ENCODE measurements at regions of chr11 and their contacts with region 1.

Region 1: DNA sequence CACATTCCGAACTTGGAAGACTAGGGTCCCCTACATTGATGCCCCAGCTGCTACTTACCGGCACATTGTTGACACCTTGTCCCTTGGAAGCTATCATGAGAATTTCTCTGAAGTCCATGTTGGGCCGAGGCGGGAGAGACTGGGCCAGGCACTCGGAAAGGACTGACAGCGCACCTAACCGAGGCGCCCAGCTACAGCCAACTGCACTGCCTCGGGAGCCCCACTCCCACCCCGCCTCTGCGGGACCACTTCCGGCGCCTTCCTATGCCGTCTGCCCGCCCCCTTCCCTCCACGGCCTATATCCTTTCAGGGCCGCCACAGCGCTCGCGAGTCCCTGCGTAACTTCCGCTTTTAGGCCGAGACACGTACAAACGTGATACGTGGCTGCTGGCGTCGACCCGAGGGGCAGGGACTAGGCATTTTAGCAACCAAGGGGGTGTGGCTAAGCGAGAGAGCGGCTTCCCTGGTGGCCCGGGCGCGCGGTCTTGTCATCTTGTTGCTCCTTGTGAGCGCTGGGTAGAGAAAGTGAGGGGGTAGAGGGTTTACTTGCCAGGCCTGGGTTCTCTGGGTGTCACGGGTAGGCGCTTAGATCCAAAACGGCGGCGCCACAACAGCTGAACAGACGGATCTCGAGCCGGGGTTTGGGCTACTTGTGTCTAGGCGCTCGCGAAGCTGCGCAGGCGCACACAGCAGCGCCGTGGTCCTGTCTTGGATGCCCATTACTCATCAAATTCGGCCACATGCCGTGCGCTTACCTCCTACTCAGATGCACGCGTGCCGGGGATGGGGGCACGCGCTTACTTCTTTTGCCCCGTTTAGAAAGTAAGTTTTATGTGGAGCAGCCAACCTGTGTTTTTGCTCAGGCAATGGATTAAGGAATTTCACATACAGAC is at the start of gene SPTY2D1:
- DNase-seq: peak; percentile 88 to 99 (median 98)
- ATAC-seq: peak; percentile 97
- H3K4me3 ChIP-seq: peak within 1 kb of the TSS; percentile 98
- H3K4me3 Mint-ChIP-seq: peak within 1 kb of the TSS; percentile 83 to 99 (median 96)
- H3K27ac ChIP-seq: peak within 1 kb of the TSS; percentile 98
- H3K27ac Mint-ChIP-seq: peak within 1 kb of the TSS; percentile 95 to 100 (median 98)
- H3K4me1 ChIP-seq: peaks cover 10 to 17% of the 10 kb centered on the region in 2 donors
- H3K4me1 Mint-ChIP-seq: peaks cover 6 to 58% (median 32%) of the 10 kb centered on the region in 7 donors
- H3K27me3 ChIP-seq: no peaks in the 10 kb centered on the region
- H3K27me3 Mint-ChIP-seq: peaks cover 0 to 7% (median 0%) of the 10 kb centered on the region in 5 donors
- total RNA-seq, gene SPTY2D1: 26.0 to 37.4 (median 28.2) TPM

Region 2: GRCh38 chr11:18012863-18013781 is 621.3 kb before region 1 on chr11 and contains the start of gene SERGEF:
- CTCF ChIA-PET with region 1: no interaction called
- POLR2A ChIA-PET with region 1: no interaction called
- intact Hi-C with region 1: loop called (anchors 1 to 2 kb)
- DNase-seq: peak; percentile 81 to 96 (median 87)
- ATAC-seq: peak; percentile 93
- H3K4me3 ChIP-seq: peak within 1 kb of the TSS; percentile 85
- H3K4me3 Mint-ChIP-seq: peak within 1 kb of the TSS; percentile 93 to 100 (median 98)
- H3K27ac ChIP-seq: peak within 1 kb of the TSS; percentile 84
- H3K27ac Mint-ChIP-seq: peak within 1 kb of the TSS; percentile 89 to 99 (median 99)
- H3K4me1 ChIP-seq: peaks cover 10% of the 10 kb centered on the region in 2 donors
- H3K4me1 Mint-ChIP-seq: peaks cover 17 to 47% (median 37%) of the 10 kb centered on the region in 7 donors
- H3K27me3 ChIP-seq: no peaks in the 10 kb centered on the region
- H3K27me3 Mint-ChIP-seq: no peaks in the 10 kb centered on the region
- total RNA-seq, gene SERGEF: 35.0 to 57.7 (median 52.9) TPM

Region 3: GRCh38 chr11:18395735-18396504 is 238.5 kb before region 1 on chr11:
- CTCF ChIA-PET with region 1: no interaction called
- POLR2A ChIA-PET with region 1: interaction called, 6 read pairs
- intact Hi-C with region 1: loop called (anchors 1 kb)
- DNase-seq: peak; percentile 87 to 98 (median 95)
- ATAC-seq: peak; percentile 78
- H3K4me3 ChIP-seq: peak overlapping the region; percentile 78
- H3K4me3 Mint-ChIP-seq: peak overlapping the region; percentile 96 to 99 (median 98)
- H3K27ac ChIP-seq: peak overlapping the region; percentile 95
- H3K27ac Mint-ChIP-seq: peak overlapping the region; percentile 94 to 98 (median 96)
- H3K4me1 ChIP-seq: peaks cover 12 to 14% of the 10 kb centered on the region in 2 donors
- H3K4me1 Mint-ChIP-seq: peaks cover 14 to 63% (median 32%) of the 10 kb centered on the region in 7 donors
- H3K27me3 ChIP-seq: no peaks in the 10 kb centered on the region
- H3K27me3 Mint-ChIP-seq: no peaks in the 10 kb centered on the region

Region 4: DNA sequence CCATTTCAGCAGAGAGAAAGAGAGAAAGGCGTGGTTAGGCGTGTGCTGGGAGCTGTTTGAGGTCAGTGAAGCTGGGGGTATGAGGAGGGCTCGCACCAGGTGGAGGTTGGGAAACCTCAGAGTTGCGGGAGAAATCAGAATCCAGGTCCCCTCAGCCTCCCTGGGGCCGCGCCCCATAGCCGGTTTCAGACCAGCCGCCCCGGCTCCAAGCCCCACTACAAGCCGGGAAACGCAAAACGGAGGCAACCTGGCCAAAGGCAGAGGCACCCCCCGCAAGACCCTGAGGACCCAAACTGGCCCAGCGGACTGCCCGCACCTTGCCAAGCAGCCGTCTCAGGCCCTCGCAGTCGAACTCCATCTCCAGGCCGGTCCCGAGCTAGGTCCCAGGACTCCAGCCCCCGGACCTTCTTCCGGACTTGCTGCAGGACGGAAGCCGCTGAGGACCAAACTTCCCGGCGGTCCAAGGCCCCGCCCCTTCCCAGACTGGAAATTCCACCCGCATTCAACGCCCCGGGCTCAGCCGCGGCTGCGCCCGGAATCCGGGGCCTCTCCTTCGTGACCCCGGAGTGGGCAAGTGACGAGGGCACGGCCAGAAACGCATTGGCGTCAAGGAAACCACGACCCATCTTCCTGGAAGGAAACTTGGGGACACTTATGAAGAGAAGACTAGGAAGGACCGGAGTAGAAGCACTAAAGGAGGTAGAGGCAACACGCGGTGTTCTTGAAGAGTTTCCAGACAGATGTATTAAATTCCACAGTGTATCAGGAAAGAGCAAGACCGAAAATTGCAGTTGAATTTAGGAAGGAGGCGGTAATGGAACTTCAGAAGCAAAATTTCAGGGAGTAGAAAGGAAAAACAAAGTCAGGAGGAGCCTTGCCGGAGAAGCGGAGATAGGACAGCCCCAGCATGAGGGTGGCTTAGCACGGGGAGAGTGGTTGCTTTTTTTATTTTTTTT is 45.8 kb before region 1 on chr11 and contains the start of gene UEVLD:
- CTCF ChIA-PET with region 1: no interaction called
- POLR2A ChIA-PET with region 1: interaction called, 14 read pairs
- intact Hi-C with region 1: loop called (anchors 1 kb)
- DNase-seq: peak; percentile 18 to 82 (median 23)
- ATAC-seq: peak; percentile 62
- H3K4me3 ChIP-seq: peak within 1 kb of the TSS; percentile 63
- H3K4me3 Mint-ChIP-seq: no peak within 1 kb of the TSS
- H3K27ac ChIP-seq: peak within 1 kb of the TSS; percentile 68
- H3K27ac Mint-ChIP-seq: no peak within 1 kb of the TSS
- H3K4me1 ChIP-seq: peaks cover 8 to 15% of the 10 kb centered on the region in 2 donors
- H3K4me1 Mint-ChIP-seq: peaks cover 0 to 19% (median 0%) of the 10 kb centered on the region in 7 donors
- H3K27me3 ChIP-seq: no peaks in the 10 kb centered on the region
- H3K27me3 Mint-ChIP-seq: no peaks in the 10 kb centered on the region
- total RNA-seq, gene UEVLD: 3.6 to 19.8 (median 5.8) TPM

Region 5: DNA sequence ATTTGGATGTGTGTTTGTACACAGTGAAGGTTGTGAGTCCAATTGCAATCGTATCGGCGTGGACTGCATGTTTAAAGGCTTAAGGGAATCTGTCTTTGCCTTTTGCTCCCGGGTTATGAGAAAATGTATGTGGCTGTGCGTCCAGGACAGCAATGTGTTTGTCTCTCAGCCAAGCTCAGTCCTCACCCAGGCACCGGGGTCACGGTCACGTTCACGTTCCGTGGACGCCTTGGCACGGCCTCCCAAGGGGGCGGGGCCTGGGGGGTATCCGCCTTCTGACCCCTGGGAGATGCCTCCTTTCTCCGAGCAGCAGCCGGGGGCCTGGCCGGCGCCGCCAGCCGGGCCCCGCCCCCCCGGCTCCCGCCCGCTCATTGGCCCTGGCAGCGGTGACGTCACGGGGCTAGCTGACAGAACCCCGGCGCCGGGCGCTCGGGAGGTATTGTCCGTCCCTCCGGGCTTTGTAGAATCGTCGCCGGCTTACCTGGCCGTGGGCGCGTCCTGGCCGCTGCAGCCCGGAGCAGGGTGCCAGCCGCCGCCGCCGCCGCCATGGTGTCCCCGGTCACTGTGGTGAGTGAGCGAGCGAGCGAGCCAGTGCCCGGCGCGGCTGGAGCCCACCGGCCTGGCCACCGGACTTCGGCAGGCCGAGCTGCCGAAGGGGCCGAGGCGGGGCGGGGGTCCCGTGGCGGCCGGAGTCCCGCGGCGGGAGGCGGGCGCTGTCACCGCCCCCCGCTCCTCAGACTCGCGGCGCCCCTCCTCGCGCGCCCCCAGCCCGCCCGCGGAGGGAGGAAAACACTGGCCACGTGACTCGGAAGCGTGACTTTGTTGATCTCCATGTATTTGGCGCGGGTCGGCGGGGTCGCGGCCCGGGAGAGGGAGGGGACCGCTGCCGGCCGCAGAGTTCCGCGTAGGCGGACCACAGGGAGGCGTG is 64.2 kb after region 1 on chr11 and contains the start of gene TMEM86A:
- CTCF ChIA-PET with region 1: no interaction called
- POLR2A ChIA-PET with region 1: interaction called, 12 read pairs
- intact Hi-C with region 1: loop called (anchors 1 kb)
- DNase-seq: peak; percentile 81 to 89 (median 87)
- ATAC-seq: peak; percentile 97
- H3K4me3 ChIP-seq: peak within 1 kb of the TSS; percentile 42
- H3K4me3 Mint-ChIP-seq: peak within 1 kb of the TSS; percentile 76 to 89 (median 84)
- H3K27ac ChIP-seq: peak within 1 kb of the TSS; percentile 72
- H3K27ac Mint-ChIP-seq: peak within 1 kb of the TSS; percentile 42 to 95 (median 89)
- H3K4me1 ChIP-seq: peaks cover 6% of the 10 kb centered on the region in 2 donors
- H3K4me1 Mint-ChIP-seq: peaks cover 14 to 27% (median 20%) of the 10 kb centered on the region in 7 donors
- H3K27me3 ChIP-seq: no peaks in the 10 kb centered on the region
- H3K27me3 Mint-ChIP-seq: peaks cover 0 to 39% (median 0%) of the 10 kb centered on the region in 5 donors
- total RNA-seq, gene TMEM86A: 0.53 to 6.5 (median 5.5) TPM

Region 6: DNA sequence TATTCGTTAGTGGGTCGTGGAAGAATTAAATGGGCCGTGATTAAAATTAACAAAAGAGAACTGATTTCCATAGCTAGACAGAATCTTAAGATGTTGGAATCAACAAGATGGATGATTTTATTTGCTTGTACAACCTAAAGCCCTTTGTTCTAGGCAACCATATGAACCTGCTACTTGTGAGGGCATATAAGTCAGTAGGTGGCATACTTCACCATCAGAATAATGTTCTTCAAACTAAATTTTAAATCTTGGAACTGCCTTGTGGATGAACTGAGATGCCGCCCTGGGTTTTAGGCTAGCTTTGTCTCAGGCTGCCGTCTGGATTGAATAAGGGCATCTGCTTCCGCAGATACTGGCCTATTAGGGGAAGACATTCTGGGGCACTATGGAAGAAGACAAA is 526.5 kb after region 1 on chr11:
- CTCF ChIA-PET with region 1: no interaction called
- POLR2A ChIA-PET with region 1: no interaction called
- intact Hi-C with region 1: no loop called
- DNase-seq: no peak
- ATAC-seq: no peak
- H3K4me3 ChIP-seq: no peak overlapping the region
- H3K4me3 Mint-ChIP-seq: no peak overlapping the region
- H3K27ac ChIP-seq: no peak overlapping the region
- H3K27ac Mint-ChIP-seq: no peak overlapping the region
- H3K4me1 ChIP-seq: no peaks in the 10 kb centered on the region
- H3K4me1 Mint-ChIP-seq: peaks cover 0 to 18% (median 0%) of the 10 kb centered on the region in 7 donors
- H3K27me3 ChIP-seq: no peaks in the 10 kb centered on the region
- H3K27me3 Mint-ChIP-seq: no peaks in the 10 kb centered on the region

Region 7: GRCh38 chr11:19240420-19241259 is 606.3 kb after region 1 on chr11 and contains the start of gene E2F8:
- CTCF ChIA-PET with region 1: no interaction called
- POLR2A ChIA-PET with region 1: no interaction called
- intact Hi-C with region 1: loop called in 1 of 2 experiments (anchors 1 kb)
- DNase-seq: peak; percentile 42 to 95 (median 62)
- ATAC-seq: peak; percentile 86
- H3K4me3 ChIP-seq: peak within 1 kb of the TSS; percentile 75
- H3K4me3 Mint-ChIP-seq: peak within 1 kb of the TSS; percentile 73 to 97 (median 85)
- H3K27ac ChIP-seq: no peak within 1 kb of the TSS
- H3K27ac Mint-ChIP-seq: peak within 1 kb of the TSS in 2 of 9 donors; percentile 41 to 85
- H3K4me1 ChIP-seq: peaks cover 12 to 13% of the 10 kb centered on the region in 2 donors
- H3K4me1 Mint-ChIP-seq: peaks cover 8 to 49% (median 22%) of the 10 kb centered on the region in 7 donors
- H3K27me3 ChIP-seq: peaks cover 8 to 25% of the 10 kb centered on the region in 2 donors
- H3K27me3 Mint-ChIP-seq: peaks cover 6 to 43% (median 35%) of the 10 kb centered on the region in 5 donors
- total RNA-seq, gene E2F8: 0.17 to 25.4 TPM in 2 of 5 experiments, not detected in the others